Heart left ventricle (tissue), 16 donors: ENCODE measurements at regions of chr7 and their contacts with region 1.

Region 1: DNA sequence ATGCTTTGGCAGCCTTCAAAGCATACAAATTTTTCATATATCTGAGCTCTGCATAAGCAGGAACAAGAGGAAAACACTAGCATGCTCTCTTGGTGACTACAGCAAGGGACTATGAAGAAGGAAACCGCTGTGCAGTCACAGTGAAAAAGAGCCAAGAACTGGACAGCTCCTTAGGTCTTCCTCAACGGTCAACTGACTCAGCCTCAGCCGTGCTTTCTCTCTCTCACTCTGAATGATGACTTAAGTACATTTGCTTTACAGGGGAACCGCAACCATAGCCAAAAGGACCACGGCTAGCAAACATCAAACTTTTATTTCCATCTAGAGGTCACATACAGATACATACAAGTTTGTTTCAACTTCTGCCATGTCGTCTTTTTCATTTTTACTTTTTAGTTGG is 69.9 kb downstream of the HYCC1 start:
- DNase-seq: no peak
- ATAC-seq: peak in 3 of 4 donors; percentile 38 to 54 (median 42)
- H3K4me3 ChIP-seq: no peak overlapping the region
- H3K27ac ChIP-seq: no peak overlapping the region
- H3K4me1 ChIP-seq: peaks cover 0 to 7% (median 0%) of the 10 kb centered on the region in 12 donors
- H3K27me3 ChIP-seq: no peaks in the 10 kb centered on the region
- CTCF ChIP-seq: no peak
- POLR2A ChIP-seq: no peak

Region 2: GRCh38 chr7:22860784-22861482 is 83.1 kb before region 1 on chr7:
- intact Hi-C with region 1: loop called in 2 of 10 experiments (anchors 5 to 10 kb)
- DNase-seq: no peak
- ATAC-seq: no peak
- H3K4me3 ChIP-seq: no peak overlapping the region
- H3K27ac ChIP-seq: peak overlapping the region in 7 of 12 donors; percentile 27 to 97 (median 47)
- H3K4me1 ChIP-seq: peaks cover 0 to 37% (median 20%) of the 10 kb centered on the region in 12 donors
- H3K27me3 ChIP-seq: no peaks in the 10 kb centered on the region
- CTCF ChIP-seq: peak; percentile 22 to 63 (median 48)
- POLR2A ChIP-seq: no peak

Region 3: DNA sequence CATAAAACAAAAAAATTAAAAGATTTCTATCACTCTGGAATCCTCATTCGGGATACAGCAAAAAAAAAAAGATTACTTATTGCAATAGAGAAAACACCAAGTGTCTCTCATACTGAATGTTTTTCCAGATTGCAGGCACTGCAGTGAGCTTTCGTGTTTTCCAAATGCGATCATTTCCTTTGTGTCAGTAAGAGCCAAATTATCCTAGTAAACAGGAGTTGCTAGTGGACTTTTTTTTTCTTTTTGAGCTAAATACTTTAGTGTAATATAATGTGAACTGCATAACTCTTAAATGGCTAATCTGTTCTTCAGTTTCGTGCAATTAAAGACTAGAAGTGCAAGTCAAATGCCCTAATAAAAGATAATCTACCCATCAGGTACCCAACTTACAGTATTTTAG is 77.0 kb before region 1 on chr7:
- intact Hi-C with region 1: loop called in 2 of 10 experiments (anchors 5 to 10 kb)
- DNase-seq: no peak
- ATAC-seq: peak in 3 of 4 donors; percentile 72 to 86 (median 74)
- H3K4me3 ChIP-seq: no peak overlapping the region
- H3K27ac ChIP-seq: peak overlapping the region; percentile 43 to 90 (median 75)
- H3K4me1 ChIP-seq: peaks cover 0 to 31% (median 22%) of the 10 kb centered on the region in 12 donors
- H3K27me3 ChIP-seq: no peaks in the 10 kb centered on the region
- CTCF ChIP-seq: no peak
- POLR2A ChIP-seq: no peak

Region 4: GRCh38 chr7:23013715-23014649 is 70.0 kb after region 1 on chr7 and contains the start of gene HYCC1:
- intact Hi-C with region 1: loop called in 1 of 10 experiments (anchors 5 kb)
- DNase-seq: peak; percentile 99
- ATAC-seq: peak; percentile 100
- H3K4me3 ChIP-seq: peak within 1 kb of the TSS; percentile 73 to 94 (median 84)
- H3K27ac ChIP-seq: peak within 1 kb of the TSS; percentile 58 to 87 (median 84)
- H3K4me1 ChIP-seq: peaks cover 2 to 77% (median 35%) of the 10 kb centered on the region in 12 donors
- H3K27me3 ChIP-seq: no peaks in the 10 kb centered on the region
- CTCF ChIP-seq: peak; percentile 46 to 77 (median 62)
- POLR2A ChIP-seq: peak; percentile 98 to 100
- total RNA-seq, gene HYCC1: 31.4 to 48.2 (median 35.6) TPM

Region 5: DNA sequence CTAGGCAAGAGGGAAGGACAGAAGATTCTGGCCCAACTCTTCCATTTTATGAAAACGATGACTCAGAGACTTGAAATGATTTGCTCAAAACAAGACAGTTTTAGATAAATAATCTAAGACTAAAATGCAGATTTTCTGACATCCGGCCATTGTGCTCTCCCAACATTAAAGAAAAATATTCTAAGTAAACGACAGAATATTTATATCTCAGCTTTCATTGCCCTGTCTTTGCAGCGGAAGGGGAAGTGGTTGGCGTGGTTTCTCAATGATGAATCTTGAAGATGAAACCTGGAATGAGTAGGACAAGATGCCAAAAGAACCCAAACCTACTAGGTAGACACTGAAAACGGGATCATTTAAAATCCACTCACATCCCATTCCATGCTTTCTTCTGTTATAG is 1311.1 kb after region 1 on chr7:
- intact Hi-C with region 1: no loop called
- DNase-seq: no peak
- ATAC-seq: no peak
- H3K4me3 ChIP-seq: no peak overlapping the region
- H3K27ac ChIP-seq: no peak overlapping the region
- H3K4me1 ChIP-seq: no peaks in the 10 kb centered on the region
- H3K27me3 ChIP-seq: peaks cover 0 to 5% (median 0%) of the 10 kb centered on the region in 9 donors
- CTCF ChIP-seq: no peak
- POLR2A ChIP-seq: no peak